Activated CD4-positive, alpha-beta T cell treated with anti-CD3 and anti-CD28 coated beads, Interleukin-2, amount 10 ng/mL, durations not matched to agents 24 days and 14 days (primary cell): ENCODE measurements at regions of chr7 and their contacts with region 1.

Region 1: GRCh38 chr7:21526007-21526406 is 16.8 kb upstream of the DNAH11 start:
- DNase-seq: peak; percentile 68
- H3K4me3 Mint-ChIP-seq: no peak overlapping the region
- H3K27ac Mint-ChIP-seq: no peak overlapping the region
- H3K4me1 Mint-ChIP-seq: no peaks in the 10 kb centered on the region
- H3K27me3 Mint-ChIP-seq: peaks cover 19% of the 10 kb centered on the region

Region 2: DNA sequence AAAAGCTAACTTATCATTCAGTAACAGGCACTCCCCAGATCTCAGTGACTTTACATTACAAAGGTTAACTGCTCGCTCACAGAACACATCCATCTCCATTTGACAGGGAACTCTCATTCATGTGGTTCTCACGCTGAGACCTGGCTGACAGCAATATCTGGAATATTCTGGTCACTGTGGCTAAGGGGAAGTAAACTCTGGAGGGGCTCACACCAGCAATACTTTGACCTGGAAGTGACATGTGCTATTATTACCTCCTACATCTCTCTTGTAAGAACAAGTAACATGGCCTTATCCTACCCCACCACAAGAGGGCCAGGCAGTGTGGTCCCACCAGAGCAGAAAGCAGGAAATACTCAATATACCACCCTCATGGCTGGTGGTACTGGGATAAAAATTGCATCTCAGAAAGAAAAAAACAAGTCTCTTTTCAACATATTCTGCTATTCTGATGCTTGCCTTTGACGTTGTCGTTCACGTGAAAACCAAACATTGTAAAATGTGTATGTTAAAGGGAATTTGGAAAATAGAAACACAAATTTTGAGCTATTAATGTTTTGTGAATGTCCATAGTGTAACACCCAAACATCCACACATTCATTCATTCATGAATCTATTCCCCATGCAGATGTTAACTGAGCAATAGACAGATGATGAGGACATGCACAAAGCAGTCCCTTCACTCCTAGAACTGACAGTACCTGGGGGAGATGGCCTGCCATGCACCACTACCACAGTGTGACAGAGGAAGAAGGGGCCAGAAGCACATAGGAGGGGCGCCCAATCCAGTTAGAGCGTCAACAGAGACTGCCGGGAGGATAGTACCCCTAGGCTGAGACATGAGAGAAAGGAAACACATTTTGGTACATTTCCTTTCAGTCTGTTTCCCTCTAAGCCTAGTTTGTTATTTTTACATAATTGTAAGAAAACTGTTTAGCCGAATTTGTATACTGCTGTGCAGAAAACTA is 264.1 kb before region 1 on chr7:
- intact Hi-C with region 1: loop called (anchors 5 kb)
- DNase-seq: peak; percentile 80
- H3K4me3 Mint-ChIP-seq: no peak overlapping the region
- H3K27ac Mint-ChIP-seq: no peak overlapping the region
- H3K4me1 Mint-ChIP-seq: peaks cover 7% of the 10 kb centered on the region
- H3K27me3 Mint-ChIP-seq: no peaks in the 10 kb centered on the region